PC-3 (cell line): ENCODE measurements at regions of chr1 and their contacts with region 1.

Region 1: GRCh38 chr1:183515018-183515689 is 42.9 kb downstream of the SMG7 start:
- DNase-seq: peak; percentile 87
- ATAC-seq: peak; percentile 98
- H3K4me3 ChIP-seq: no peak overlapping the region; the same call in 1 of the 2 replicates
- H3K27ac ChIP-seq: peak overlapping the region; percentile 86
- H3K4me1 ChIP-seq: peaks cover 29% of the 10 kb centered on the region
- H3K27me3 ChIP-seq: no peaks in the 10 kb centered on the region
- CTCF ChIP-seq: no peak

Region 2: DNA sequence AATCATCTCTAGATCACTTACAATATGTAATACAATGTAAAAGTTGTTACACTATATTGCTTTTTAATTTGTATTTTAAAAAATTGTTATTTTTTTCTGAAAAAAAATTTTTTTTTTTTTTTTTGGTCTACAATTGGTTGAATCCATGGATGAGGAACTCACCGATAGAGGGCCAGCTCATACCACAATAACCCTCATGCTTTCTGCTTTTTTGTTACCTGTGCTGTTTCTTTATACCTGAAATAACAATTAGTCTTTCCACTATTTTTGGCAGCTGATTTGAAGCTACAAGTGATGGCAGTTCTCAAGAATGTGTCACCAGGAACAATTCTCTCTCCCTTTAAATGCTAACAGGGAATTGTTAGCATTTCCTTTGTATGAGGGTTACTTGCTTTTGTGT is 30.9 kb before region 1 on chr1:
- CTCF ChIA-PET with region 1: no interaction called
- POLR2A ChIA-PET with region 1: no interaction called
- intact Hi-C with region 1: no loop called
- DNase-seq: no peak
- ATAC-seq: no peak
- H3K4me3 ChIP-seq: no peak overlapping the region
- H3K27ac ChIP-seq: no peak overlapping the region
- H3K4me1 ChIP-seq: peaks cover 18% of the 10 kb centered on the region
- H3K27me3 ChIP-seq: no peaks in the 10 kb centered on the region
- CTCF ChIP-seq: no peak

Region 3: GRCh38 chr1:183528577-183528976 is 13.4 kb after region 1 on chr1:
- CTCF ChIA-PET with region 1: no interaction called
- POLR2A ChIA-PET with region 1: no interaction called
- intact Hi-C with region 1: loop called (anchors 2 kb)
- DNase-seq: peak; percentile 1
- ATAC-seq: peak; percentile 69
- H3K4me3 ChIP-seq: no peak overlapping the region
- H3K27ac ChIP-seq: peak overlapping the region; percentile 80
- H3K4me1 ChIP-seq: peaks cover 12% of the 10 kb centered on the region
- H3K27me3 ChIP-seq: no peaks in the 10 kb centered on the region
- CTCF ChIP-seq: no peak